H1 (cell line): ENCODE measurements at regions of chr2 and their contacts with region 1.

Region 1: DNA sequence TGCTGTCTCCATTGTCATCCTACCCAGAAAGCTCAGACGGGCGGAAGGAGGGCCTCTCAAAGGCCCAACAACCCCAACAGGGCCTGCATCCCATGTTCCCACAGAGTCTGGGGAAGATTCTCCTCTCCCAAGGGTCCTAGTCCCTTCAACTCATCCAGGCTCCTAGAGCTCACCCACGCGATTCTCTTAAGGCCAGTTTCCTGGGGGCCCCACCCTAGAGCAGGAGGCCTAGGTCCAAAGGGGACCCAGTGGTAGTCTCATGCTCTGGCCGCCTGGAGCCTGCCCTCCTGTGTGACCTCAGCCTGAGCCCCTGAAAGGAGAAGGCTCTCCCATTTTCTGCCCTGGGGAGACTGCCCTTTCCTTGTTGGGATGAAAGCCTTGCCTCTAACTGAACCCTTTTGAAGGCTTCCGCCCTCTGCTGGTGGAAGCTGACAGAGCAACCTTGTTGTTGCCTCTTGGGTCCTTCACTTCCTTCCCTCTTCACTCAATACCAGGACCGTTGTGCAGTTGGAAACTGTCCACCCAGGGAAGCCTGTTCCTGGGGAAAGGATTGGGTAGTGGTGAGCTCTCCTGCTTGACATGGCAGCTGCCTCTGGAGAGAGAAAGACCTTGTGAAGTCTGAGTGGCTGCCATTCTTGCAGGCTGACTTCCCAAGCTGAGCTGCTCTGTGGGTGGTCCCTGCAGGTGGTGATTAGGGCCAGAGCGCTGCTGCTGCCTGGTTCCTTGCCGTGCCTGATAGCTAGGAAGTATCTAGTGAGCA is 86.0 kb upstream of the ALPP start:
- DNase-seq: peak; percentile 46 to 89
- H3K4me3 ChIP-seq: no peak overlapping the region
- H3K27ac ChIP-seq: no peak overlapping the region
- H3K4me1 ChIP-seq: peaks cover 2 to 5% (median 3%) of the 10 kb centered on the region in 4 experiments; a peak in 5 of 7 replicates
- H3K27me3 ChIP-seq: no peaks in the 10 kb centered on the region
- CTCF ChIP-seq: peak; percentile 72 to 95 (median 77)
- EP300 ChIP-seq: no peak
- POLR2A ChIP-seq: no peak
- RAD21 ChIP-seq: peak; percentile 59 to 72

Region 2: DNA sequence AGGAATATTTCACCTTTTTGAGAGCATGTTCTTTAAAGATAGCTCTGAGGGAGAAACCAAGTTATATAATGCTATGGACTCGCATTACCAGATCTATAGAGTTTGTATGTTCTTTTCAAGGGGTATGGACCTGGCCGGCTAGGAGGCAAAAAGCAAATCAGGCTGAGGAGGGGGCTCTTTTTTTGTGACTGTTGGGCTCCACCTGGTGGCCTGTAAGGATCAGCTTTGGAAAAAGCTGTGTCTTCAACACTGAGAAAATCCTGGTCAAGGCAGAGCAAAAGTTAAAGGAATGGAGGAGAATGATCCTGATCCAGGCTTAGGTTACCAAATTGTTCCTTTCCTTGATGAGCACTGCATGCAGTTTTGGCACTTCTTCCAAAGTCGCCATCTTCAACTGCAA is 150.5 kb before region 1 on chr2:
- CTCF ChIA-PET with region 1: interaction called, 13 read pairs
- POLR2A ChIA-PET with region 1: no interaction called
- DNase-seq: no peak
- H3K4me3 ChIP-seq: no peak overlapping the region
- H3K27ac ChIP-seq: no peak overlapping the region
- H3K4me1 ChIP-seq: no peaks in the 10 kb centered on the region
- H3K27me3 ChIP-seq: no peaks in the 10 kb centered on the region
- CTCF ChIP-seq: peak; percentile 41 to 91 (median 82)
- EP300 ChIP-seq: no peak
- POLR2A ChIP-seq: no peak
- RAD21 ChIP-seq: peak; percentile 86 to 91

Region 3: DNA sequence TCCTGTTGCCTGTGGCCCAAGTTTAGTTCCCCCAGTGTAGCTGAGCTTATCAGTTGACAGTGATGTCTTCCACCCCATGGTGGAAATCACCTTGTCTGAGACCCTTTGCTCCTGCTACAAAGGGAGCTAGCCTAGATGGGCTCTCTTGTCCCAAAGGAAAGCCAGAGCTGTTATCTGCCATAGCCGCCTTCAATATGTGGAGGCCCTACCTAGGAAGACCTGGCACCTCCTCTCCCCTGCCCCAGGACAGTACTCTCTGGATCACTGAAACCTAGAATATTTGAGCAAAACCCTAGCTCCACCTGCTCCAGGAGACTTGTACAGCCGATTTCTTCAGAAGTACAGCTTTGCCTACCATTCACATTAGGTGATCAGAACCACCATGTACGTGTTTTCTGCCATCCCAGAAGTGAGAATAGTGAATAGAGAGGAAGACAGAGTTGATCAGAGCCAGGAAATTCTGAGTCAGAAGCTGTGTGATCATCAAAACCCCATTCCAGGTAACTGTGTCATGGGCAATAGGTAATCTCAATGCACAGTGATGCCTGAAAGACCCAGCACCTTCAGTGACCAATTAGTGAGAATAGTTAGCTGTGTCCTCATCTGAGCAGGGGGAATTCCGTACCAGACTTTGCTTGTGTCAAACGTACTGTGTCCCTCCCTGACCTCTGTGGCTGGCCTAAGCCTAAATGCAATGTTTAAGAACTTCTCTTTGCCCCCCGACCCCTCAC is 52.5 kb before region 1 on chr2:
- CTCF ChIA-PET with region 1: interaction called, 13 read pairs
- POLR2A ChIA-PET with region 1: no interaction called
- DNase-seq: no peak
- H3K4me3 ChIP-seq: no peak overlapping the region
- H3K27ac ChIP-seq: no peak overlapping the region
- H3K4me1 ChIP-seq: no peaks in the 10 kb centered on the region
- H3K27me3 ChIP-seq: no peaks in the 10 kb centered on the region
- CTCF ChIP-seq: no peak
- EP300 ChIP-seq: no peak
- POLR2A ChIP-seq: no peak
- RAD21 ChIP-seq: no peak

Region 4: GRCh38 chr2:232260075-232260474 is 32.5 kb before region 1 on chr2:
- CTCF ChIA-PET with region 1: interaction called, 16 read pairs
- POLR2A ChIA-PET with region 1: no interaction called
- DNase-seq: no peak
- H3K4me3 ChIP-seq: no peak overlapping the region
- H3K27ac ChIP-seq: no peak overlapping the region
- H3K4me1 ChIP-seq: no peaks in the 10 kb centered on the region
- H3K27me3 ChIP-seq: no peaks in the 10 kb centered on the region
- CTCF ChIP-seq: no peak
- EP300 ChIP-seq: no peak
- POLR2A ChIP-seq: no peak
- RAD21 ChIP-seq: no peak

Region 5: DNA sequence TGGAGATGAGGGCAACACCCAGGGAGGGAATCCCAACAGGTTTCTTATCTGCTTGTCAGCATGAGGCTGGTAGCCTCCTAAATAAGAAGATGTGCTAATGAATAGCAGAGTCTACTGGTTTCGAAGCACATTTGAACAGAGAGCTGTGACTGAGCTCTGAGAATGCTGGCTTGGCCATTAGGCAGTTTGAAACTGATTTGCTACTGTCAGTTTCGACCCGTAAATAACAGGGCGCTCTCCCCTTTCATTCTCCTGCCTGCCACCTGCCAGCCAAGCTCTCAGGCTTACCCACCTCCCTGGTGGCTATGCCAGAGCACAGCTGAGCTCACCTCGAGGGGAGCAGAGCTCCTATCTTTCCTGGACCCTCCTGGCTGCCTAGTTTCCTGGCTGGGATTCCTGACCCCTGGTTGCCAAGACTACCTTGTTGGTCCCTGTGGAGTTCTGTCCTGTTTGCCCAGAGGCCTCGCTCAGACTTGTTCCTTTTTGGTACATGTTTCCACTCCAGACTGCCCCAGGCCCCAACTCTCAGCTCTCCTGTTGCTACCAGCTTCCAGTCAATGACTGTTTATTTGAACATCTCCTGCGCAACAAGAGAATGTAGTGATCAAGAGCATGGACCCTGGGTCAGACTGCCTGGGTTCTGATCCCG is 16.4 kb before region 1 on chr2:
- CTCF ChIA-PET with region 1: interaction called, 59 read pairs
- POLR2A ChIA-PET with region 1: no interaction called
- DNase-seq: no peak
- H3K4me3 ChIP-seq: 0 out of 8 replicates have a peak overlapping the region, but pooled peaks of 1 of the 4 experiments have one; percentile 18
- H3K27ac ChIP-seq: no peak overlapping the region
- H3K4me1 ChIP-seq: peaks cover 7 to 12% (median 11%) of the 10 kb centered on the region in 4 experiments; a peak in 6 of 7 replicates
- H3K27me3 ChIP-seq: no peaks in the 10 kb centered on the region
- CTCF ChIP-seq: no peak
- EP300 ChIP-seq: no peak
- POLR2A ChIP-seq: no peak
- RAD21 ChIP-seq: no peak

Region 6: GRCh38 chr2:232321156-232321816 is 28.7 kb after region 1 on chr2:
- CTCF ChIA-PET with region 1: interaction called, 34 read pairs
- POLR2A ChIA-PET with region 1: no interaction called
- DNase-seq: peak in 1 of 2 experiments; percentile 79
- H3K4me3 ChIP-seq: no peak overlapping the region
- H3K27ac ChIP-seq: no peak overlapping the region
- H3K4me1 ChIP-seq: peaks cover 0 to 10% (median 3%) of the 10 kb centered on the region in 4 experiments; a peak in 5 of 7 replicates
- H3K27me3 ChIP-seq: no peaks in the 10 kb centered on the region
- CTCF ChIP-seq: peak in 2 of 3 experiments; percentile 49 to 56; a peak in 3 of 4 replicates
- EP300 ChIP-seq: no peak
- POLR2A ChIP-seq: no peak
- RAD21 ChIP-seq: peak; percentile 23 to 31; a peak in 3 of 4 replicates

Region 7: GRCh38 chr2:232632908-232633732 is 340.5 kb after region 1 on chr2 and contains the start of gene EFHD1:
- CTCF ChIA-PET with region 1: no interaction called
- POLR2A ChIA-PET with region 1: no interaction called
- DNase-seq: peak in 1 of 2 experiments; percentile 88
- H3K4me3 ChIP-seq: peak within 1 kb of the TSS; percentile 54 to 82 (median 58)
- H3K27ac ChIP-seq: no peak within 1 kb of the TSS
- H3K4me1 ChIP-seq: peaks cover 0 to 9% (median 1%) of the 10 kb centered on the region in 4 experiments; a peak in 4 of 7 replicates
- H3K27me3 ChIP-seq: peaks cover 21 to 53% (median 41%) of the 10 kb centered on the region in 4 experiments
- CTCF ChIP-seq: no peak
- EP300 ChIP-seq: no peak
- POLR2A ChIP-seq: no peak
- RAD21 ChIP-seq: no peak
- total RNA-seq, gene EFHD1: 1.5 and 3.4 TPM in 2 replicates